ENCODE measurements at regions of chr7 and their contacts with region 1.

Region 1: DNA sequence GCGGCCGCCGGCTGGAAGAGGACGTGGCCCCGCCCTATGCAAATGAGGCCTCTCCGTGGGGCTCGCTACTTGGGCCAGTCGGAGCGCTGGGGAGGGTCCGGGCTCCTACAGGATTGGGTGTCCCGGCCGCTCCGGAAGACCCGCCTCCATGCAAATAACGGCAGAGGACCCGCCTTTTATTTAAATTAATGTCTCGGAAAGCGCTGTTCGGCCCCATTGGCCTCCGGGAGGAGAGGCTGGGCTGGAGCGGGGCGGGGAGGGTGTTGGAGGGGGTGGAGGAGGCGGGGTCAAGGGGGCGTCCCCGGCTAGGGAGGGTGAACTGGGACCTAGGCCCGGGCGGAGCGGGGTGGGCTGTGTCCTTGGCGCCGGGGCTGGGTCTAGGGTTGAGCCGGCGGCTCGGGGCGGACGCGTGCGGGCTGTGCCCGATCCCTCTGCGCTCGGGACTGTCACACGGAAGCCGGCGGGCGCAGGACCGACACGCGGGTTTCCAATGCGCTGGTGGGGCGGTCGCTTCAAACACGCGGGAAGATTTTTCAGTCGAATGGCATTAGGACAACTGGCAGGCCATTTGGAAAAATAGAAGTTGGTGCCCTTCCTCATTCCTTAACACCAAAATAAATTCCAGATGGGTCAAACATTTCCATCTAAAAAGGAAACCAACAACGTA is 344 bp upstream of the POLM start:
- DNase-seq: peak; percentile 94 to 99 (median 98)
- ATAC-seq: peak; percentile 93
- H3K4me3 ChIP-seq: peak overlapping the region; percentile 66
- H3K4me3 Mint-ChIP-seq: peak overlapping the region; percentile 95
- H3K27ac ChIP-seq: peak overlapping the region; percentile 37 to 68
- H3K27ac Mint-ChIP-seq: peak overlapping the region; percentile 80
- H3K4me1 ChIP-seq: peaks cover 28% of the 10 kb centered on the region
- H3K4me1 Mint-ChIP-seq: peaks cover 30% of the 10 kb centered on the region
- H3K27me3 ChIP-seq: no peaks in the 10 kb centered on the region
- H3K27me3 Mint-ChIP-seq: no peaks in the 10 kb centered on the region
- CTCF ChIP-seq: no peak

Region 2: DNA sequence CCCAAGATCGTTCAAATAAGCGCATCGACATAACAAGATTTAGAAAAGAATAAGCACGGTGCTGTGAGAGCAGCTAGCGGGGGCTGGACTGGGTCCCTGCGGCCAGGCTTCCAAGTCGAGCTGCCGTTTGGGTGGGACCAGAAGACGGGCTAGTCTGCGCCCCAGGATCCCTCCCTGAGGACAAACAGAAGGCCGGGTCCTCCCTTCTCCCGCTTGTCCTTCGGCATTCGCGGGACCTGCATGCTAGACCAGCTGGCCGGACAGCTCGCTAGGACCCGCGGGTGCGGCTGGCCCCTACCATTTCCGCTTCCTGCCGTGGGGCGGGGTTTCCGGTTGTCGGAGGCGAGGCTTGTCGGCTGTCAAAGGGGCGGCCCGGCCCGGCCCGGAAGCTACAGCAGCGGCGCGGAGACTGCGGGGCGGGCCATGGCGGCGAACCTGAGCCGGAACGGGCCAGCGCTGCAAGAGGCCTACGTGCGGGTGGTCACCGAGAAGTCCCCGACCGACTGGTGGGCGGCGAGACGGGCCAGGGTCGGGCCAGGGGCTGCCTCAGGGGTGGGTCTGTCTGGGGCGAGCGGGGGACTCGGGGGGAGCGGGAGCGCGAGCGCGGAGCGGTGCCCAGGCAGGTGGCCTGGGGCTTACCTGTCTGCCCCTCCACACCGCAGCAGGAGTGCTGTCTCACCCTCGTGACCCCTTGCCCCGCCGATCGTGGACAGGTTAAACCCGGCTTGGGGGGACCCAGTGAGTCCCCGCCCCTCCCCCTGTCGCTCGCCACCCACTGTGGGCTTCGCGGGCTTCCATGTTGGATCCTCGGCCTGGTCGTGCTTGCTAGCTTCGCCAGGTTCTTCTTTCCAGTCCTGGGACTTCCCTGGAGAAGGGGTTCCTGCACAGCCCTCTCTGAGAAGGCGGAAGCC is 38.1 kb before region 1 on chr7 and contains the start of gene DBNL:
- CTCF ChIA-PET with region 1: interaction called, 5 read pairs
- POLR2A ChIA-PET with region 1: interaction called, 16 read pairs
- intact Hi-C with region 1: loop called (anchors 1 to 5 kb)
- DNase-seq: peak; percentile 75 to 92 (median 88)
- ATAC-seq: peak; percentile 54
- H3K4me3 ChIP-seq: peak within 1 kb of the TSS; percentile 99
- H3K4me3 Mint-ChIP-seq: peak within 1 kb of the TSS; percentile 87
- H3K27ac ChIP-seq: peak within 1 kb of the TSS; percentile 89
- H3K27ac Mint-ChIP-seq: peak within 1 kb of the TSS; percentile 91
- H3K4me1 ChIP-seq: peaks cover 62% of the 10 kb centered on the region
- H3K4me1 Mint-ChIP-seq: peaks cover 50% of the 10 kb centered on the region
- H3K27me3 ChIP-seq: no peaks in the 10 kb centered on the region
- H3K27me3 Mint-ChIP-seq: no peaks in the 10 kb centered on the region
- CTCF ChIP-seq: no peak
- total RNA-seq, gene DBNL: 88.5 to 90.6 TPM

Region 3: GRCh38 chr7:44072364-44073231 is 10.1 kb before region 1 on chr7:
- CTCF ChIA-PET with region 1: interaction called, 4 read pairs
- POLR2A ChIA-PET with region 1: interaction called, 14 read pairs
- intact Hi-C with region 1: no loop called
- DNase-seq: peak in 7 of 14 experiments; percentile 31 to 67 (median 55)
- ATAC-seq: peak; percentile 59
- H3K4me3 ChIP-seq: no peak overlapping the region
- H3K4me3 Mint-ChIP-seq: no peak overlapping the region
- H3K27ac ChIP-seq: no peak overlapping the region
- H3K27ac Mint-ChIP-seq: peak overlapping the region; percentile 68
- H3K4me1 ChIP-seq: peaks cover 19% of the 10 kb centered on the region
- H3K4me1 Mint-ChIP-seq: peaks cover 15% of the 10 kb centered on the region
- H3K27me3 ChIP-seq: no peaks in the 10 kb centered on the region
- H3K27me3 Mint-ChIP-seq: no peaks in the 10 kb centered on the region
- CTCF ChIP-seq: peak; percentile 17

Region 4: GRCh38 chr7:44145969-44146911 is 63.6 kb after region 1 on chr7:
- CTCF ChIA-PET with region 1: no interaction called
- POLR2A ChIA-PET with region 1: interaction called, 4 read pairs
- intact Hi-C with region 1: loop called in 1 of 2 experiments (anchors 2 kb)
- DNase-seq: peak; percentile 17 to 84 (median 62)
- ATAC-seq: peak; percentile 62
- H3K4me3 ChIP-seq: peak overlapping the region; percentile 60
- H3K4me3 Mint-ChIP-seq: peak overlapping the region; percentile 77
- H3K27ac ChIP-seq: no peak overlapping the region
- H3K27ac Mint-ChIP-seq: peak overlapping the region; percentile 79
- H3K4me1 ChIP-seq: peaks cover 20% of the 10 kb centered on the region
- H3K4me1 Mint-ChIP-seq: peaks cover 7% of the 10 kb centered on the region
- H3K27me3 ChIP-seq: peaks cover 0 to 8% of the 10 kb centered on the region in 2 experiments
- H3K27me3 Mint-ChIP-seq: no peaks in the 10 kb centered on the region
- CTCF ChIP-seq: no peak

Region 5: DNA sequence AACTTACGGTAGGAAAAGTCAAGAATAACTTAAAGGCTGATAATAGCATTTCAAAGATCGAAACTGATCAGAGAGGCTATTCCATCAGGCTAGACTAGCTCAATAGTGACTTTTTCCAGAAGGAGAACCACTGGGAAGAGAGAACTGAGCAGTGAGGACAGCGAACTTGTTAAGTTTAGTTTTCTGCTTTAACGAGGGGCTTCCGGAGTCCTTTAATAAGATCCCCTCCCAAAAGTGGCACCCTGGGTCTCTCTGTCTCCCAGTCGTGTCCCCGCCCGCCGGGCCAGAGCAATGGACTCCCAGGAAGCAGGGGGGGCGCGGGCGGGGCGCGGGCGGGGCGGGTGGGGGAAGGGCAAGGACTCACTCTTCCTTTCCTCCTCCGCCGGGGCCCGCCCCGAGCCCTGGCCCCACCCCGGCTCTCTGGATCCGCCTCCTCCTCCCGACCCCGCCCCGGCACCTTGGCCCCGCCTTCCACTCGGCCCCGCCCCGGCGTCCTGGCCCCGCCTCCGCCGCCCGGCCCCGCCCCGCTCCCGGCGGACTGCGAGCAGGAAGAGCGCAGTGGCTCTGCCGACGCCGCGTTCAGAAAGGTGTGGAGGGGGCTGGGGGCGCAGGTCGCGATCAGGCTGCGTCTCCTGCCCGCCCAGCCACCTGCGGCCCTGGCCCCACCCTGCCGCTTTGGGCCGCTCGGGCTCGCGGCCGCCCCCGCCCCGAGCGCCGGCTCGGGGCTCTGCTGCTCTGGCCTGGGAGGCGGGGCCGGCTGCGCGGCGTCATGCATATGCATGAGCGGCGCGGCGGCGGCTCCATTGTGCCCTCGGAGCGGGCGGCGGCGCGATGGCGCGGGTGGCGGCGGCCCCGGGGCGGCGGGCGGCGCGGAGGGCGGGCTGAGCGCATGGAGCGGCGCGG is 665.6 kb after region 1 on chr7 and contains the start of gene ZMIZ2:
- CTCF ChIA-PET with region 1: no interaction called
- POLR2A ChIA-PET with region 1: no interaction called
- intact Hi-C with region 1: loop called in 1 of 2 experiments (anchors 2 kb)
- DNase-seq: peak; percentile 85 to 97 (median 92)
- ATAC-seq: peak; percentile 85
- H3K4me3 ChIP-seq: peak within 1 kb of the TSS; percentile 87
- H3K4me3 Mint-ChIP-seq: peak within 1 kb of the TSS; percentile 84
- H3K27ac ChIP-seq: peak within 1 kb of the TSS; percentile 70 to 75
- H3K27ac Mint-ChIP-seq: peak within 1 kb of the TSS; percentile 86
- H3K4me1 ChIP-seq: peaks cover 37% of the 10 kb centered on the region
- H3K4me1 Mint-ChIP-seq: peaks cover 43% of the 10 kb centered on the region
- H3K27me3 ChIP-seq: no peaks in the 10 kb centered on the region
- H3K27me3 Mint-ChIP-seq: no peaks in the 10 kb centered on the region
- CTCF ChIP-seq: no peak
- total RNA-seq, gene ZMIZ2: 81.5 to 82.0 TPM